Caco-2 (cell line): ENCODE measurements at regions of chr2 and their contacts with region 1.

Region 1: DNA sequence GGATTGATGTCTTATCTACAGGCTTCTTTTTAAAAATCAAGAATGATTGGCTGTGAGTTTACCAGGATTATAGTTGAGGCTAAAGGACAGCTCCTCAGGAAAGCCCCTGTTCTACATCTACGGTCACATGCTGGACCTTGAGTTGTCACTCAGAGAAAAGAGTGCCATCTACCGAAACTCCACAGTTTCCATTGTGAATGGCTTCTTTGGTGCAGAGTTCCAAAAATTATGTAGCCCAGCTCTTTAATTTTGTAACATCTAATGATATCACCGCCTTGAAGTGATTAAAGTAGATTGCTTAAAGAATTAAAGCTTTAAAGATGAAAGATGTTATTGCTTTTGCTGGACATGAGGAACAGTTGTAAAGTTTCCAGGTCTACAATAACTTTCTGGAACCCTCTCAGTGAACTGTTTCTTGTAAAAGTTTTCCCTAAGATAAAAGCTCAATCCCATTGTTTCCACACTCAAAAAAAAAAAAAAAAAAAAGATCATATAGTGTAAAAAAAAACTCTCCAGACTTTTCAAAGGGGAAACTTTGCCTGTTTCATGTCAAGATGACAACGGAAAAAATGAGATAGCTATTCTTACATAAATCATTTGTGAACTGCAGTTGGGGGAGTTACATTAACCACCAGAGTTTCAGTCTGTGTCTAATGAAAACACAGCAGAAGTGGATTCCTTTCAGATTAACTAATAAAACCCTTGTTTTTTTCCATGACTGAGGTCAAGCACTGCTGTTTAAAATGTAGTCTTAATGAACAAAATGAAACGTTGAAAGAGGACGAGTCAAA is 4.3 kb downstream of the COL3A1 start:
- DNase-seq: peak; percentile 50 to 53
- H3K4me3 ChIP-seq: no peak overlapping the region
- H3K4me3 Mint-ChIP-seq: no peak overlapping the region
- H3K27ac Mint-ChIP-seq: peak overlapping the region; percentile 57
- H3K4me1 ChIP-seq: peaks cover 12% of the 10 kb centered on the region
- H3K4me1 Mint-ChIP-seq: peaks cover 14% of the 10 kb centered on the region
- H3K27me3 ChIP-seq: no peaks in the 10 kb centered on the region
- H3K27me3 Mint-ChIP-seq: no peaks in the 10 kb centered on the region
- CTCF ChIP-seq: peak; percentile 36 to 61

Region 2: GRCh38 chr2:188765522-188766470 is 212.7 kb before region 1 on chr2:
- CTCF ChIA-PET with region 1: no interaction called
- POLR2A ChIA-PET with region 1: no interaction called
- intact Hi-C with region 1: loop called (anchors 1 kb)
- DNase-seq: peak; percentile 48 to 62
- H3K4me3 ChIP-seq: no peak overlapping the region
- H3K4me3 Mint-ChIP-seq: no peak overlapping the region
- H3K27ac Mint-ChIP-seq: no peak overlapping the region
- H3K4me1 ChIP-seq: no peaks in the 10 kb centered on the region
- H3K4me1 Mint-ChIP-seq: no peaks in the 10 kb centered on the region
- H3K27me3 ChIP-seq: no peaks in the 10 kb centered on the region
- H3K27me3 Mint-ChIP-seq: peaks cover 2% of the 10 kb centered on the region
- CTCF ChIP-seq: peak; percentile 39 to 75